ENCODE measurements at regions of chr20 and their contacts with region 1.

Region 1: GRCh38 chr20:3716195-3716834 is 3.9 kb upstream of the SIGLEC1 start:
- DNase-seq: peak; percentile 24
- H3K4me3 Mint-ChIP-seq: no peak overlapping the region
- H3K27ac Mint-ChIP-seq: no peak overlapping the region
- H3K4me1 Mint-ChIP-seq: no peaks in the 10 kb centered on the region
- H3K27me3 Mint-ChIP-seq: peaks cover 5% of the 10 kb centered on the region

Region 2: DNA sequence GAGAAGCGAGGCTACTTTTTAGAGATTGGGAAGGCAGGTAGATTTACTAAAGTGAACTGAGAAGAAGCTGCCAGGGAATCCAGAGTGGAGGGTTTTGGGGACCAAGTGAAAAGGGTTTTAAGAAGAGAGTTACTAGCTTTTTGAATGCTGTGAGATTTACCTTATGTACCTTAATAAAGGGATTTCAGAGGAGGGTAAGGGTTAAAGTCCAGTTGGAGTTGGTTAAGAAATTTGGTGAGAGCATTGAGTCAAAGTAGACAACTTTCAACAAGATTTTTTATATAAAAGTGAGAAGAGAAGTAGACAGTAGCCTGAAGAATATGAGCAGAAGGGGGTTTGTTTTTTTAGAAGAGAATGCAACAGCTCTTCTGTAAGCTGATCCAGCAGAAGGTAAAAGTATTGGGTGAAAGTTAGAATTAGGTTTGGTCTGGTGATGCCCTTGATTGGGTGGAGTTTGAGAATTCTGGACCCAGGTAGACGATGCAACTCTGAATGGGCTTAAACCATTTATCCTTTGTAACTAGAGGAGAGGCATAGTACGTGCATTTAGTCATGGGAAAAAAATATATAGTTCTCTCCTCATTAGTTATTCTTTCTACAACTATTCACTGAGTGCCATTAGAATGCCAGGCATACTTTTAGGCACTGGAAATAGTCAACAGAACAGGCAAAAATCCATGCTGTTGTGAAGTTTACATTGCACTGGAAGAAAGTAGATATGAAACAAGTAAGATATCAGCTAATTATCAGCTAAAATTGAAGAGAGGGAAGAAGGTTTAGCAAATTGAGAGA is 200.7 kb before region 1 on chr20:
- CTCF ChIA-PET with region 1: no interaction called
- intact Hi-C with region 1: no loop called
- DNase-seq: no peak
- H3K4me3 Mint-ChIP-seq: no peak overlapping the region
- H3K27ac Mint-ChIP-seq: no peak overlapping the region
- H3K4me1 Mint-ChIP-seq: no peaks in the 10 kb centered on the region
- H3K27me3 Mint-ChIP-seq: no peaks in the 10 kb centered on the region

Region 3: GRCh38 chr20:3854462-3854871 is 138.2 kb after region 1 on chr20:
- CTCF ChIA-PET with region 1: no interaction called
- intact Hi-C with region 1: loop called (anchors 1 kb)
- DNase-seq: no peak
- H3K4me3 Mint-ChIP-seq: no peak overlapping the region
- H3K27ac Mint-ChIP-seq: no peak overlapping the region
- H3K4me1 Mint-ChIP-seq: peaks cover 9% of the 10 kb centered on the region
- H3K27me3 Mint-ChIP-seq: no peaks in the 10 kb centered on the region

Region 4: GRCh38 chr20:3995067-3995748 is 278.9 kb after region 1 on chr20:
- CTCF ChIA-PET with region 1: no interaction called
- intact Hi-C with region 1: no loop called
- DNase-seq: peak; percentile 34
- H3K4me3 Mint-ChIP-seq: no peak overlapping the region
- H3K27ac Mint-ChIP-seq: peak overlapping the region; percentile 68
- H3K4me1 Mint-ChIP-seq: peaks cover 46% of the 10 kb centered on the region
- H3K27me3 Mint-ChIP-seq: no peaks in the 10 kb centered on the region

Measured in activated naive CD4-positive, alpha-beta T cell treated with anti-CD3 and anti-CD28 coated beads for 36 hours (primary cell).